Posterior vena cava (tissue), 2 donors: ENCODE measurements at regions of chr1 and their contacts with region 1.

Region 1: DNA sequence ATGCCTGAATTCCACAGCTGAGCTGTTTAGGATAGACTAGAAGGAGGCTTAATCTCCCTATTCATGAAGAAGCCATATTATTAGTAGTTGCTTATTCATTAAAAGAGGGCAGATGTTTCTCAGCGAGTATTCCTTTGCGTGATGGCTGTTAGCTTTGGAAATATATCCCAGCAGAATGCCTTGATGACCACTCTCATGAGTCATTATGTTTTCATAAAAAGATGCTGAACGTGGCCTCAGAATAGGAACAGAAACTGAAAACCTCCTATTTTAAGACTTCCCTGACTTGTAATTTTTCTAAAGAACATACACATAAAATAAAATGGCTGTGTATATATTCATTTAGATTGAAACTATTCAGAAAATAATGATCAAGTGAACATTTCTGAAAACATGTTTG is 9.6 kb upstream of the PLA2G4A start:
- DNase-seq: no peak

Region 2: GRCh38 chr1:186620951-186621350 is 198.2 kb before region 1 on chr1:
- intact Hi-C with region 1: no loop called
- DNase-seq: no peak

Region 3: DNA sequence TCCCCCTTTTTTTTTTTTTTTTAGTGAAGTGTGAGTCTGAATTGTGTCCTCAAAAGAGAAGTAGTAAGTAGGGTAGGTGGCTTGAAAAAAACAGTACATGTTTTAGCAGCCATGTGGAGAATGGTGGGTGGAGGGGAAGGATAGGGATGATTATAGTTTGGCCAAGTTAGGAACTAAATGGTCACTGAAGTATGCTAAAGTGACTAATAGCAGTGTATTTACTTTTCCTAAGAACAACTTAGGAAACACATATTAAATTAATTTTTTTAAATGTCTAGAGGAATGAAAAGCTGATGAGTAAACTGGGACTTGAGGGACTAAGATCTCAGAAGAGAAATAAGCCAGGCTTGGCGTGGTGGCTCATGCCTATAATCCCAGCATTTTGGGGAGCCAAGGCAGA is 65.1 kb after region 1 on chr1:
- intact Hi-C with region 1: loop called in 1 of 2 experiments (anchors 10 kb)
- DNase-seq: no peak

Region 4: DNA sequence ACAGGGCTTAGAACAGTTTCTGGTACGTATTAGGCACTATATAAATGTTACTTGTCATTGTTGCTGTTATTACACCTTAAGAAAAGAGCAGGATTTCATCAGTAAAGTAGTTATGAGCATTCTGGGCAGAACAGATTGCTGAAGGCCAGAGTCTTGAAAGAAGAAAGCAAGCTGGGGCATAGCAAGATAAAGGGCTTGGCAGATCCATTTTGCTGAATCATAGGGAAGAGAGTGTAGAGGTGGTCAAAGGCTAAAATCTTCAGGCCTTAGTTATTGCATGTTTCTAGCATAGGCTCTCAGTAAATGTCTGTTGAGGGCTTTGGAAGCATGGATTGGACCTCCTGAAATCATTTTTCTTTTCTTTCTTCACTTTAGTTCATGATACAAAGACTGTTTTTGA is 77.1 kb after region 1 on chr1:
- intact Hi-C with region 1: no loop called
- DNase-seq: no peak